Endothelial cell of umbilical vein (primary cell): ENCODE measurements at regions of chr3 and their contacts with region 1.

Region 1: GRCh38 chr3:128794770-128795649 is 69.0 kb downstream of the RAB7A start:
- DNase-seq: peak; percentile 67
- H3K4me3 ChIP-seq: no peak overlapping the region
- H3K27ac ChIP-seq: no peak overlapping the region
- H3K4me1 ChIP-seq: peaks cover 15% of the 10 kb centered on the region
- H3K27me3 ChIP-seq: no peaks in the 10 kb centered on the region
- CTCF ChIP-seq: peak; percentile 69 to 82
- POLR2A ChIP-seq: peak; percentile 35

Region 2: DNA sequence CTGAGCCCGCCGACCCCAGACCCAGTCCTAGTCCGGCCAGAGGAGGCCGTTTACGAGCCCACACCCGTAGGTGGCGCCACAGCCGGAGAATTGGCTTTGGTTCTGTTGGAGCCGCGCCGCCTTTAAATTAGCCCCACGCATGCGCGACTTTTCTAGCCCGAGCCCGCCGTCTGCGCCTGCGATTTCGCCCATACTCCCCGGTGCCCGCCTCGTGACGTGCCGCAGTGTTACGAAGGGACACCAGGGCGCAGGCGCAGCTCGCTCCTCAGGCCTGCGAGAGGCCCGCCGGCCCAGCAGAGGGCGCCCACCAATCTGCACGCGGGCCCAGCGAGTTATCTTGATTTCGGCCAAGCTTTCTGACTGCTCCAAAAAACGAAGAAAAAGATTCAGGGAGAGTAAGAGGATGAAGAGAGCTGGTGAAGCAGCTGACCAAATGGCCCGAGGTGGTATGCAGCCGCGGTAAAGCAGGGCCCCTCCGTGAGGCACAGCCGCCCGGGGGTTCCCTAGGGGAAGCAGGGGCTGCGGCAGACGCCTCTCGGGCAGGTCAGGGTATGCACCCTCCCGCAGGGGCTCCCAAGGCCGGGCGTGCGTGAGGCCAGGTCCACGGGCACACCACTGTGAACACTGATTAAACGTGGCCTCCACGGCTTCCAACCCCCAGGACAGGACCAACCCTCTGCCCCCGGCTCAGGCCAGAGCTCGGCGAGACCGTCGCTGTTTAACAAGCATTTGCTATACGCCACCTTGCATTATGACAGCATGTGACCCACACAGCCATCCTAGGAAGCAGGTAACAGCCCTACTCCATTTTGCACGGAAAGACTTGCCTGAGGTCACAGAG is 177.2 kb before region 1 on chr3:
- CTCF ChIA-PET with region 1: interaction called, 4 read pairs
- POLR2A ChIA-PET with region 1: no interaction called
- dilution Hi-C with region 1: no loop called
- intact Hi-C with region 1: loop called (anchors 2 kb)
- DNase-seq: peak; percentile 98
- H3K4me3 ChIP-seq: peak overlapping the region; percentile 48 to 65 (median 58)
- H3K27ac ChIP-seq: peak overlapping the region; percentile 53
- H3K4me1 ChIP-seq: peaks cover 35% of the 10 kb centered on the region
- H3K27me3 ChIP-seq: no peaks in the 10 kb centered on the region
- CTCF ChIP-seq: peak; percentile 86 to 98
- POLR2A ChIP-seq: no peak

Region 3: DNA sequence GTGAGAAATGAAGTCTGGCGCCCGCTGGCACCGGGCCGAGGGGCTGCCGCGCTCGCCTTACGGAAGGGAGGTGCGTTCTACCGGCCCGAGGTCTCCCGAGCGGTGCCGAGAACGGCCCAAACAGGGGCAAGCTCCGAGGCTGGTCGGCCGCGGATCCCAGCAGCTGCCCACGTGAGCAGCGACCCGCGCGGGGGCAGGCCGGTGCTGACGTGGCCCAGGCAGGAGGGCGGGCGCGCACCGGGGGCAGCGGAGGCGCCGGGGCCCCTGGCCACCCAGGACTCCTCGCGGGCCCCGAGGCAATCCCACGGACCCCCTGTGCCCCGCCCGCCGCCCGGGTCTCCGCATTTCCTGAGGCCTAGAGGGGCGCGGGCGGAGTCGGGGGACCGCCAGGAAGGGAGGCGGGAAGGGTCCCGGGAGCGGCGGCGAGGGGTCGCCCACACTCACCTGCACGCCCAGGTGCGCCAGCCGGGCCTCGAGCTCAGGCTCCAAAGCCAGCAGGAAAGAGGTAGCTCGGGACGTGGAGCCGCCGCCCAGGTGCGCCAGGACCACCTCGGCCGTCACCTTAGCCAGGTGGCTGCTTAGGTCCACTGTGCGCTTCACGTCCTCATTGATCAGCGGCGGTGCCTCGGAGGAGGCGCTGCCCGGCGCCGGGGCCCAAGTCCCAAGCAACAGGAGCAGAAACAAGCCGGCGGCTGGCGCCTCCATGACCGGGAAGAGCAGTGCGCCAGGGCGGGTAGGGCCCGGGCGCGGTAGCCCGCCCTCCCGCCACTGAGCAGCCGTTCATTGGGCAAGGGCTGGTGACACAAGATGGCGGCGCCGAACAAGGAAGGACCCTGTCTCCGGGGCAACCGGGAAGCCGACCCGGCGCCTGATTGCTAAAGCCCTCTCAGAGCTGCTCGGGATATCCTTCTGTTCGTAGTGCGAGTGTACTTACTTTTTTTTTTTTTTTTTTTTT is 144.6 kb before region 1 on chr3 and contains the start of gene RPN1:
- CTCF ChIA-PET with region 1: no interaction called
- POLR2A ChIA-PET with region 1: no interaction called
- dilution Hi-C with region 1: no loop called
- intact Hi-C with region 1: no loop called
- DNase-seq: peak; percentile 97
- H3K4me3 ChIP-seq: peak within 1 kb of the TSS; percentile 92 to 99 (median 96)
- H3K27ac ChIP-seq: peak within 1 kb of the TSS; percentile 95
- H3K4me1 ChIP-seq: peaks cover 8% of the 10 kb centered on the region
- H3K27me3 ChIP-seq: no peaks in the 10 kb centered on the region
- CTCF ChIP-seq: no peak
- POLR2A ChIP-seq: peak; percentile 89
- total RNA-seq, gene RPN1: 244 and 250 TPM in 2 replicates

Region 4: GRCh38 chr3:128665362-128666038 is 129.5 kb before region 1 on chr3:
- CTCF ChIA-PET with region 1: interaction called, 14 read pairs
- POLR2A ChIA-PET with region 1: no interaction called
- dilution Hi-C with region 1: no loop called
- intact Hi-C with region 1: no loop called
- DNase-seq: peak; percentile 50
- H3K4me3 ChIP-seq: no peak overlapping the region
- H3K27ac ChIP-seq: no peak overlapping the region
- H3K4me1 ChIP-seq: peaks cover 3% of the 10 kb centered on the region
- H3K27me3 ChIP-seq: peaks cover 5 to 9% of the 10 kb centered on the region in 2 experiments
- CTCF ChIP-seq: peak in 1 of 2 donors; percentile 7
- POLR2A ChIP-seq: no peak

Region 5: DNA sequence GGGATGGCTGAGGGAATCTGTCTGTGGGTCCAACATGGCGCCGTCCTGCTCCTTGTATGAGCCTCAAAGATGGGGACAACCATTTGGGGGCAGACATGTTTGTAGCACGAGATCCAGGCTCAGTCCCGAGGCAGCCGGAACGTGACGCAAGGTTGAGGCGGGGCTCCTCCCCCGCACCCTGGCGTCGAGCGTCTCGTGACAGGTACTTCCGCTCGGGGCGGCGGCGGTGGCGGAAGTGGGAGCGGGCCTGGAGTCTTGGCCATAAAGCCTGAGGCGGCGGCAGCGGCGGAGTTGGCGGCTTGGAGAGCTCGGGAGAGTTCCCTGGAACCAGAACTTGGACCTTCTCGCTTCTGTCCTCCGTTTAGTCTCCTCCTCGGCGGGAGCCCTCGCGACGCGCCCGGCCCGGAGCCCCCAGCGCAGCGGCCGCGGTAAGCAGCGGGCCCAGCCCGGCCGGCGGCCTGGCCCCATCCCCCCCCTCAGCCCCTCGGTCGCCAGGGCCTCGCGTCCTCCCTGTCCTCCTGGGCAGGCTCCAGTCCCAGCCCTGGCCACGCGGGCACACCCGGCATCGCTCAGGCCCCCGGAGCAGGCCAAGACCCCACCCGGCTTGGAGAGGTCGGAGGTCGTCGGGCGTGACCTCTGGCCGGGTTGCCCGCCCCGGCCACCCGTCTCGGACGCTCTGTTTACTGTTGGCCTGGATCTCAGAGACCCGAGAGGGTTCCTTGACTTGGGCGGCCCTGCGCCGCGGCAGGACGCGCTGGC is 68.9 kb before region 1 on chr3 and contains the start of gene RAB7A:
- CTCF ChIA-PET with region 1: interaction called, 22 read pairs
- POLR2A ChIA-PET with region 1: no interaction called
- dilution Hi-C with region 1: no loop called
- intact Hi-C with region 1: loop called (anchors 5 kb)
- DNase-seq: peak; percentile 99
- H3K4me3 ChIP-seq: peak within 1 kb of the TSS; percentile 53 to 89 (median 84)
- H3K27ac ChIP-seq: peak within 1 kb of the TSS; percentile 90
- H3K4me1 ChIP-seq: peaks cover 18% of the 10 kb centered on the region
- H3K27me3 ChIP-seq: peaks cover 6 to 7% of the 10 kb centered on the region in 2 experiments
- CTCF ChIP-seq: no peak
- POLR2A ChIP-seq: peak; percentile 90
- total RNA-seq, gene RAB7A: 249 and 262 TPM in 2 replicates

Region 6: DNA sequence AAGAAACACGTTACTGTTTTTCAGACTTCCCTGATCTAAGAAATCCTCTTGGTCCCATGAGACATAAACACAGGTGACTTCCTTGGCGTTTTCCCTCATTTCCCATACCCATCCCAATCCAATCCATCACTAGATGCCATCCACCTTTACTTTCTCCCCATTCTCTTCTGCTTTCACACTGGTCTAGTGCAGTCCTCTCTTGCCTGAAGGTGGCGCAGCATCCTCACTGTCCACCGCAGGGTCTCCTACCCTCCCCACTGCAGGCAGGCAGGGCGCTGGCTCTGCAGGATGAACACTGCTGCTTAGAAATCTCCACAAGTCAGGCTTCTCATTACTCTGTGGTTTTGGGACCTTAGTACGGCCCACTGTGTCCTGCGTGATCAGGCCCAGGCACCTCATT is 10.8 kb before region 1 on chr3:
- CTCF ChIA-PET with region 1: interaction called, 18 read pairs
- POLR2A ChIA-PET with region 1: no interaction called
- dilution Hi-C with region 1: no loop called
- intact Hi-C with region 1: loop called (anchors 1 kb)
- DNase-seq: peak; percentile 21
- H3K4me3 ChIP-seq: no peak overlapping the region
- H3K27ac ChIP-seq: no peak overlapping the region
- H3K4me1 ChIP-seq: peaks cover 17% of the 10 kb centered on the region
- H3K27me3 ChIP-seq: no peaks in the 10 kb centered on the region
- CTCF ChIP-seq: peak; percentile 27 to 44
- POLR2A ChIP-seq: no peak

Region 7: DNA sequence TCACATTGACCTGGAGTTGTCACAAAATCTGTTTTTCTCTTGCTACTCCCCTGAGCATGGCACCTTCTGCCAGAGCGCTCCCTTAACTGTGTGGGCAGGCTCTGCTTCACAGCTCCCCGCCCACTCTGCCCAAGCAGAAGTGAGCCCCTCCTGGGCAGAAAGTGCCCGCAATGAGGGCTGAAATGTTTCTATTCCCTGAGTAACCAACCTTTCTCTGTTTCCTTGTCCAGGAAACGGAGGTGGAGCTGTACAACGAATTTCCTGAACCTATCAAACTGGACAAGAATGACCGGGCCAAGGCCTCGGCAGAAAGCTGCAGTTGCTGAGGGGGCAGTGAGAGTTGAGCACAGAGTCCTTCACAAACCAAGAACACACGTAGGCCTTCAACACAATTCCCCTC is 18.1 kb after region 1 on chr3:
- CTCF ChIA-PET with region 1: interaction called, 16 read pairs
- POLR2A ChIA-PET with region 1: no interaction called
- dilution Hi-C with region 1: no loop called
- intact Hi-C with region 1: no loop called
- DNase-seq: peak; percentile 74
- H3K4me3 ChIP-seq: no peak overlapping the region
- H3K27ac ChIP-seq: peak overlapping the region; percentile 4
- H3K4me1 ChIP-seq: peaks cover 13% of the 10 kb centered on the region
- H3K27me3 ChIP-seq: no peaks in the 10 kb centered on the region
- CTCF ChIP-seq: no peak
- POLR2A ChIP-seq: no peak

Region 8: GRCh38 chr3:128845778-128846485 is 50.9 kb after region 1 on chr3:
- CTCF ChIA-PET with region 1: interaction called, 10 read pairs
- POLR2A ChIA-PET with region 1: no interaction called
- dilution Hi-C with region 1: no loop called
- intact Hi-C with region 1: no loop called
- DNase-seq: peak; percentile 79
- H3K4me3 ChIP-seq: peak overlapping the region; percentile 37 to 54 (median 54)
- H3K27ac ChIP-seq: no peak overlapping the region
- H3K4me1 ChIP-seq: peaks cover 4% of the 10 kb centered on the region
- H3K27me3 ChIP-seq: no peaks in the 10 kb centered on the region
- CTCF ChIP-seq: peak; percentile 65 to 78
- POLR2A ChIP-seq: no peak